Dendritic cell treated with granulocyte-macrophage colony-stimulating factor and Interleukin-4, amounts not matched to agents 40 ng/mL and 50 ng/mL, for 4 days (primary cell): ENCODE measurements at regions of chr5 and their contacts with region 1.

Region 1: GRCh38 chr5:55691265-55692105 is 20.6 kb downstream of the SLC38A9 start:
- H3K4me3 Mint-ChIP-seq: no peak overlapping the region
- H3K27ac Mint-ChIP-seq: peak overlapping the region; percentile 34
- H3K4me1 Mint-ChIP-seq: peaks cover 24% of the 10 kb centered on the region
- H3K27me3 Mint-ChIP-seq: no peaks in the 10 kb centered on the region

Region 2: DNA sequence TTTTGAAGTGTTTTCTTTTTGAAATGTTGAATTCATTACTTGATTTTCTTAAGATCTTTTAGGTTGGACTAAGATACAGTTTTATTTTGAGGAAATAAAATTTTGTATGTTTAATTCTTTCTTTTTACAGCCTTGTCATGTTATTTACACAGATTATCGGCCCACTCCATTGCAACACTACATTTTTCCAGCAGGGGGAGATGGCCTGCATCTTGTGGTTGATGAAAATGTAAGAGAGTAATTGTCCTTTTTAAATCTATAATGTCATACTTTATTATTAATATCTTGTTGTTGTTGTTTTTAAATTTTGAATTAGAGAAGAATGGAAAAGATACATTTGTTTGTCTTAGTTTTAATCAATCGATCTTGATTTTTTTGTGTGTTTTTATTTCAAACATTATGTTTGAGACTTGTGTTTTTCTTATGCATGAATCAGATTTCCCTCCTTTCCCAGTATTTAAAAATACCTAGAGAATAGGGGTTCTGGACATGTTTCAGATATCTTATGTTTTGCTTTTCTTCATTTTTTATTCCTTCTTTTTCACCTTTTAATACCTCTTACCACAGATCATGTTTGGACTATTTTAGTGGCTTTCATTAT is 347.0 kb before region 1 on chr5:
- intact Hi-C with region 1: loop called (anchors 2 kb)
- H3K4me3 Mint-ChIP-seq: no peak overlapping the region
- H3K27ac Mint-ChIP-seq: no peak overlapping the region
- H3K4me1 Mint-ChIP-seq: no peaks in the 10 kb centered on the region
- H3K27me3 Mint-ChIP-seq: no peaks in the 10 kb centered on the region

Region 3: GRCh38 chr5:55407059-55407684 is 284.3 kb before region 1 on chr5:
- intact Hi-C with region 1: loop called (anchors 1 kb)
- H3K4me3 Mint-ChIP-seq: no peak overlapping the region
- H3K27ac Mint-ChIP-seq: no peak overlapping the region
- H3K4me1 Mint-ChIP-seq: peaks cover 17% of the 10 kb centered on the region
- H3K27me3 Mint-ChIP-seq: no peaks in the 10 kb centered on the region

Region 4: GRCh38 chr5:55636683-55637082 is 54.8 kb before region 1 on chr5:
- intact Hi-C with region 1: no loop called
- H3K4me3 Mint-ChIP-seq: no peak overlapping the region
- H3K27ac Mint-ChIP-seq: peak overlapping the region; percentile 46
- H3K4me1 Mint-ChIP-seq: peaks cover 16% of the 10 kb centered on the region
- H3K27me3 Mint-ChIP-seq: no peaks in the 10 kb centered on the region